Ascending aorta (tissue), 2 donors: ENCODE measurements at regions of chr15 and their contacts with region 1.

Region 1: DNA sequence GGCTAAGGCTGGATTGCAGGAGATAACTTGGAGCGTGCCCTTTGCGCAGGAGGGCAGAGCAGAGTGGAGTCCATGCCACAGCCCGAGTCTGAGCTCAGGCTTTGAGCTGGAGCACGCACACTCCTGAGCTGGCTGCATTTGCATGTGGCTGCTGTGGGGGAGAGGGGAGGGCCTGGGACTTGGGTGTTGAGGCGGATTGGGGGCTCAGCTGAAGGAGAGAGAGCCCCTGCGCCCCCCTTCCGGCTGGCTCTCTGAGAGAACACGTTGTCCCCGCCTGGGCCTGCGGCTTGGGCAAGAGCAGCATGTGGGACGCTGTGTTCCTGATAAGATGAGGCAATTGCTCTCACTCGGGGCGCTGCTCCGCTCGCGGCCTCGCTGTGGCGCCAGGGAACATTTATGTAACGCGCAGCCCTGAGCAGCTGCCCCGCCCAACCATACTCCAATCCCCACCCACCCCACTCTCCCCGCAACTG is 39.1 kb downstream of the KLF13 start:
- DNase-seq: peak; percentile 88 to 98
- H3K4me3 ChIP-seq: peak overlapping the region; percentile 18 to 58
- H3K27ac ChIP-seq: peak overlapping the region; percentile 74 to 79
- H3K4me1 ChIP-seq: peaks cover 15 to 38% of the 10 kb centered on the region in 2 donors
- H3K27me3 ChIP-seq: no peaks in the 10 kb centered on the region
- CTCF ChIP-seq: peak; percentile 20 to 63 (median 52)

Region 2: DNA sequence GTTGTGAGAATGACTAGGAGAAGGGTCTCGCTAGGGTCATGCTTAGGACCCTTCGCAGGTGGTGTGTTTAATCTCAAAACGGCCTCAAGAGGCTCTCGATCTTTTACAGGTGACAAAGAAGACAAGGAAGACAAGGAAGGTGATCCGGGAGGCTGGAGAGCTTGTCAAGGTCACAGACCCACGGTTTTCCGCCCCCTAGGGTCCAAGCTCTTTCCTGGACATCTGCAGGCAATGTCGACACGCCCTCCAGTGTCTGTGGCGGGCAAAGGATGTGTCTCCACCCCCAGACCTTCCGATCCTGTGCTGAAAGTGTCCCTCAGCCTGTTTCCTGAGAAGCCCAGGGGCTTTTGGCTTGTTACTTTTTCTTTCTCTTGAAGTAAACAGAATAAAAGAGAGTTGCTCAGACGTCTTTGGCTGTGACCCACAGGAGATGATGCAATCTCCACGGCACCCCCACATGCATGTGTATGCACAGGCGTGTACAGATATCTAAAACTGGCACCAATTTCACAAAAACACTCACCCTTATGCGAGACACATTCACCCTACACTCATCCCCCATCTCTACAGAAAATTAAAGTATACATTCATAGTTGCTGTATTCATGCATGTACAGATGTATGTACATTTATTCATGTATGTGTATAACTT is 69.7 kb after region 1 on chr15:
- intact Hi-C with region 1: loop called (anchors 2 kb)
- DNase-seq: peak; percentile 46 to 88
- H3K4me3 ChIP-seq: peak overlapping the region in 1 of 2 donors; percentile 21
- H3K27ac ChIP-seq: peak overlapping the region; percentile 51 to 56
- H3K4me1 ChIP-seq: peaks cover under 1 to 15% of the 10 kb centered on the region in 2 donors
- H3K27me3 ChIP-seq: no peaks in the 10 kb centered on the region
- CTCF ChIP-seq: peak; percentile 58 to 79 (median 68)